Activated T-helper 2 cell treated with anti-CD3 and anti-CD28 coated beads, Interferon-gamma antibody, Interleukin-2, Interleukin-4, amounts not matched to agents 10 μg/mL and 5 μg/mL and 100 μg/mL, durations not matched to agents 14 hours and 24 hours and 36 hours (primary cell): ENCODE measurements at regions of chr1 and their contacts with region 1.

Region 1: GRCh38 chr1:91325461-91325860 is 79.2 kb downstream of the HFM1 start:
- DNase-seq: no peak
- H3K4me3 Mint-ChIP-seq: no peak overlapping the region
- H3K27ac Mint-ChIP-seq: no peak overlapping the region
- H3K4me1 Mint-ChIP-seq: no peaks in the 10 kb centered on the region
- H3K27me3 Mint-ChIP-seq: peaks cover 16% of the 10 kb centered on the region

Region 2: GRCh38 chr1:90694846-90695245 is 630.6 kb before region 1 on chr1:
- intact Hi-C with region 1: loop called (anchors 5 kb)
- DNase-seq: no peak
- H3K4me3 Mint-ChIP-seq: no peak overlapping the region
- H3K27ac Mint-ChIP-seq: no peak overlapping the region
- H3K4me1 Mint-ChIP-seq: no peaks in the 10 kb centered on the region
- H3K27me3 Mint-ChIP-seq: peaks cover 14% of the 10 kb centered on the region

Region 3: GRCh38 chr1:91189096-91189495 is 136.4 kb before region 1 on chr1:
- intact Hi-C with region 1: no loop called
- DNase-seq: no peak
- H3K4me3 Mint-ChIP-seq: no peak overlapping the region
- H3K27ac Mint-ChIP-seq: no peak overlapping the region
- H3K4me1 Mint-ChIP-seq: no peaks in the 10 kb centered on the region
- H3K27me3 Mint-ChIP-seq: no peaks in the 10 kb centered on the region

Region 4: DNA sequence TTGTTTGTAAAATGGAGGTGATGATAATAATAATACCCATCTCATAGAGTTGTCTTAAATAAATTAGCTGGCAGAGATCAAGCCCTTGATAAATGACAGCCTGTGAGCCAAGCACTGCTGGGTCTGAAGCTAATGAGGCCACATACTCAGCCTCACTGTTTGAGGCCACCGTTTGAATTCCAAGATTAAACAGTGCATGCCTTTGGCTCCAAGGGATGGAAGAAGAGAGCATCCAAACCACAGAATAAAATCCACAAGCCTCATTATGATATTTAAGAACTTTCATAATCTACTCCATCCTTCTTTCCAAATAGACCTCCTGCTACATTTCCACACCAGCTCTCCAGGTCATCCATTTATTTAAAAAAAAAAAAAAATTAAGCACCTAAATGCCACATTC is 531.5 kb after region 1 on chr1:
- intact Hi-C with region 1: no loop called
- DNase-seq: no peak
- H3K4me3 Mint-ChIP-seq: no peak overlapping the region
- H3K27ac Mint-ChIP-seq: no peak overlapping the region
- H3K4me1 Mint-ChIP-seq: peaks cover 2% of the 10 kb centered on the region
- H3K27me3 Mint-ChIP-seq: no peaks in the 10 kb centered on the region